ENCODE measurements at regions of chr19 and their contacts with region 1.

Region 1: GRCh38 chr19:12681074-12681951 is at the start of gene DHPS:
- DNase-seq: peak; percentile 82 to 99
- ATAC-seq: peak; percentile 74 to 88 (median 78)
- H3K4me3 ChIP-seq: peak within 1 kb of the TSS; percentile 87
- H3K4me3 Mint-ChIP-seq: peak within 1 kb of the TSS; percentile 99
- H3K27ac ChIP-seq: peak within 1 kb of the TSS; percentile 93
- H3K27ac Mint-ChIP-seq: peak within 1 kb of the TSS; percentile 91 to 100
- H3K4me1 ChIP-seq: peaks cover 23% of the 10 kb centered on the region
- H3K4me1 Mint-ChIP-seq: peaks cover 22 to 27% of the 10 kb centered on the region in 2 donors
- H3K27me3 ChIP-seq: no peaks in the 10 kb centered on the region
- H3K27me3 Mint-ChIP-seq: no peaks in the 10 kb centered on the region
- CTCF ChIP-seq: no peak
- total RNA-seq, gene DHPS: 143 to 193 (median 145) TPM

Region 2: GRCh38 chr19:11597202-11598102 is 1083.9 kb before region 1 on chr19 and contains the start of gene ZNF627:
- intact Hi-C with region 1: loop called (anchors 2 kb)
- DNase-seq: peak; percentile 98
- ATAC-seq: peak; percentile 99 to 100 (median 99)
- H3K4me3 ChIP-seq: peak within 1 kb of the TSS; percentile 78
- H3K4me3 Mint-ChIP-seq: peak within 1 kb of the TSS; percentile 90
- H3K27ac ChIP-seq: peak within 1 kb of the TSS; percentile 81
- H3K27ac Mint-ChIP-seq: peak within 1 kb of the TSS; percentile 71 to 94
- H3K4me1 ChIP-seq: peaks cover 16% of the 10 kb centered on the region
- H3K4me1 Mint-ChIP-seq: peaks cover 24 to 29% of the 10 kb centered on the region in 2 donors
- H3K27me3 ChIP-seq: no peaks in the 10 kb centered on the region
- H3K27me3 Mint-ChIP-seq: no peaks in the 10 kb centered on the region
- CTCF ChIP-seq: peak; percentile 19
- total RNA-seq, gene ZNF627: 4.7 to 7.5 (median 4.9) TPM

Region 3: DNA sequence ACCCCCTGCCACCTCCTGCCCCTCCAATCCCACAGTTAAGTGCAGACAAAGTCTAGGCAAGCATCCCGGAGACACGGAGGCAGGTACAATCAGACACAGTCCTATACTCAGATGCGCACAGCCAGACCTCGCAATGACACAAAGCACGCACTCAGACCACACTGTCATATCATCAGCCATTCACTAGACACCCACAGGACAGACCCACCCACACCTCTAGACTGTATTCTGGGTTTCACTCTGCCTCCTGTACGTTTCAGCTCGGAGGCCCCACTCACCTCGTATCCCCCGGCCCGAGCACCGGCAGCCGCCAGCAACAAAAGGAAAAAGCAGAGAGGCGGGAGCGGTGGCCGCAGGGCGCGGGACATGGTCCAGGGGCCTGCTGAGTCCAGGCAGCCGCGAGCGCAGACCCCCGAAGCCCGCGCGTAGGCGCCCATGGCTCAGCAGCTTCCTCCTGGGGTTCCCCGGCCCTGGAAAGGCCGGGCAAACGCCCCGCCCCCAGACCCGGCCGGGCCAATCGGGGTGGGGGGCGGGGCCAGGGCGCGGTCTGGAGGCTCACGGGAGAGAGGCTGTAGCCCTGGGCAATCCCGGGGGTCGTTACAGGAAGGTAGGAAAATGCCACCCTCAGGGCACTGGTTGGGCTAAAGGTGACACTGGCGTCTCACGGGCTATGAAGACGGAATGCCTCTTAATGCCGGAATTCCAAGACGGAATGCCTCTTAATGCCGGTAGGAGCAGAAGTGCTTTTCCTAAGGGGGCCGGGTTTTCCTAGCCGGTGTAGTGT is 14.9 kb before region 1 on chr19 and contains the starts of genes MAN2B1 and WDR83:
- intact Hi-C with region 1: loop called (anchors 1 kb)
- DNase-seq: peak; percentile 77 to 91
- ATAC-seq: peak; percentile 78 to 87 (median 82)
- H3K4me3 ChIP-seq: peak within 1 kb of the TSS; percentile 94
- H3K4me3 Mint-ChIP-seq: peak within 1 kb of the TSS; percentile 96
- H3K27ac ChIP-seq: peak within 1 kb of the TSS; percentile 90
- H3K27ac Mint-ChIP-seq: peak within 1 kb of the TSS; percentile 98
- H3K4me1 ChIP-seq: peaks cover 59% of the 10 kb centered on the region
- H3K4me1 Mint-ChIP-seq: peaks cover 41 to 52% of the 10 kb centered on the region in 2 donors
- H3K27me3 ChIP-seq: no peaks in the 10 kb centered on the region
- H3K27me3 Mint-ChIP-seq: no peaks in the 10 kb centered on the region
- CTCF ChIP-seq: no peak
- total RNA-seq, gene MAN2B1: 107 to 118 (median 112) TPM
- total RNA-seq, gene WDR83: 17.0 to 25.8 (median 25.1) TPM

Region 4: DNA sequence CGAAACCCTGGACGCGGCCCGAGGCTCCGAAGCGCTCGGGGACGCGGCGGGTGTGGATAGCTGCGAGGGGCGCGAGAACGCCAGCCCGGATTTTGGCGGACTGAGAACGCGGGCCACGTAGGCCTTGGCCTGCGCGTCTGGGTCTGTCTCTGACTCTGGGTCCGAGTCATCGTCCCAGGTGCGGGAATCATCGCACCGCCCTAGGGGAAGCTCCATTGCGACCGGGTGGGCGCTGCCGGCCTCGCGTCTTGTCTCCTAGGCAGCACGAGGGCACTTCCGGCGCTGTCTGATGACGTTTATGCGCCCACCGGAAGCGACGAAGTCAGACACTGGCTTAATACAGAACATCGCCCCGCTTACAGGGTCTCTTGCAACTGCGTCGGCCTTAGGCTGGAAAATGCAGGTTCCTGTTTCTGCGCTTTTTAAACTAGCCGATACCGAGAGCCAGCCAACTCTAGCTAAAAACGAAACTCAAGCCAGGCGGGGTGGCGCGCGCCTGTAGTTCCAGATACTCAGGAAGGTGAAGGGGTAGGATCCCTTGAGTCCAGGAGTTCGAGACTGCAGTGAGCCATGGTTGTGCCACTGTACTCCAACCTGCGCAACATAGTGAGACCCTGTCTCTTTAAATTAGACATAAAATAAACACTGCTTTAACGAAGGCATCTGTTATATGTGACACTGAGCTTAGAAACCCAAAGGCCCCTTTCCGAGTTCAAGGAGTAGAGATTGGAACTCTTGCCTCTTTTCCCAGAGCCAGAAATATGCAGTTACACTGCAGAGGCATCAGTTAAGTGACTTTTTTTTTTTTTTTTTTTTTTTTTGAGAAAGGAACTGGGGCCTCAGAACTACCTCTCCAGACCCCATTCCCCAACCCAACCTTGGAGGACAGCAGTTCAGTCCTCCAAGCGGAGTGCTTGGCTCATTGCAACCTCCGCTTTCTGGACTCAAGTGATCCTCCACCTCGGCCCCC is 15.3 kb after region 1 on chr19 and contains the start of gene FBXW9:
- intact Hi-C with region 1: loop called (anchors 1 kb)
- DNase-seq: peak; percentile 98 to 99
- ATAC-seq: peak; percentile 91 to 96 (median 93)
- H3K4me3 ChIP-seq: peak within 1 kb of the TSS; percentile 80
- H3K4me3 Mint-ChIP-seq: peak within 1 kb of the TSS; percentile 93
- H3K27ac ChIP-seq: peak within 1 kb of the TSS; percentile 94
- H3K27ac Mint-ChIP-seq: peak within 1 kb of the TSS; percentile 92 to 94
- H3K4me1 ChIP-seq: peaks cover 19% of the 10 kb centered on the region
- H3K4me1 Mint-ChIP-seq: peaks cover 0 to 4% of the 10 kb centered on the region in 2 donors
- H3K27me3 ChIP-seq: no peaks in the 10 kb centered on the region
- H3K27me3 Mint-ChIP-seq: no peaks in the 10 kb centered on the region
- CTCF ChIP-seq: no peak
- total RNA-seq, gene FBXW9: 2.2 to 3.2 (median 2.9) TPM

Region 5: DNA sequence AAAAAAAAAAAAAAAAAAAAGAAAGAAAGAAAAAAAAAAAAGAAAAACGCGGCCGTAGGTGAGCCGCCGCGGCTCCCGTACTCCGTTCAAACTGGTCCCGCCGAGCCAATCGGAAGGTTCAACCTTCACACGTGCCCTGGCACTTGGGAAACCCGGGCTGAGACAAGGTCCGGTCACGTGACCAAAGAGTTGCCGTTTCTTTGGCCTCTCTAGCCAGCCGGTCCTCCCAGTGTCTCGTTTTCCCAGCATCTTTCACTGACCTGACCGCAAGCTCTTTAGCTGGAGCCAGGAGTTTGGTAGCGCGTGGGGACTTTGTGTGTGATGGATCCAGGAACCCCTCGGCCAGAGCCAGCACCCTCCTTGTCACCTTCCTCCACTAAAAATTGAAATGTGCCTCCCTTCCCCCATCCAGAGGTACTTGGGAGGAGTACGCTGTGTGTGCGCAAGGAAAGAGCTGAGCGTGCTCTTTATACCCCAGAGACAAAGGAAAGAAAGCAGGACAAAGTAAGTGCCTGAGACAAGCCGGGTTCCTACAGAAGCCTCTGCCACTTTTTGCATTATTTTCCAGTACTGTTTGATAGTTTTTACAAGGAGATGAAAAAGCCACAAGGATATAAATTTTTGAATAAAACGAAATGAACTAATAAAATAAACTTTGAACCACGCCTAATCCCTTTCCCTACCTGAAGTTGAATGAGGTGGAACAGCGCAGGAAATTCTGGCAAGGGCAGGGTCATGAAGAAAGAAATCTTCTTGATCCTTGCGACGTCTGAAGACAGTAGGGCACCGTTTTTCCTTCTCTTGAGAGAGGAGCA is 41.5 kb after region 1 on chr19:
- intact Hi-C with region 1: loop called (anchors 5 kb)
- DNase-seq: peak; percentile 87 to 99
- ATAC-seq: peak; percentile 87 to 97 (median 95)
- H3K4me3 ChIP-seq: peak overlapping the region; percentile 60
- H3K4me3 Mint-ChIP-seq: peak overlapping the region; percentile 93
- H3K27ac ChIP-seq: peak overlapping the region; percentile 44
- H3K27ac Mint-ChIP-seq: peak overlapping the region; percentile 91 to 96
- H3K4me1 ChIP-seq: peaks cover 36% of the 10 kb centered on the region
- H3K4me1 Mint-ChIP-seq: peaks cover 26 to 42% of the 10 kb centered on the region in 2 donors
- H3K27me3 ChIP-seq: no peaks in the 10 kb centered on the region
- H3K27me3 Mint-ChIP-seq: no peaks in the 10 kb centered on the region
- CTCF ChIP-seq: no peak

Region 6: DNA sequence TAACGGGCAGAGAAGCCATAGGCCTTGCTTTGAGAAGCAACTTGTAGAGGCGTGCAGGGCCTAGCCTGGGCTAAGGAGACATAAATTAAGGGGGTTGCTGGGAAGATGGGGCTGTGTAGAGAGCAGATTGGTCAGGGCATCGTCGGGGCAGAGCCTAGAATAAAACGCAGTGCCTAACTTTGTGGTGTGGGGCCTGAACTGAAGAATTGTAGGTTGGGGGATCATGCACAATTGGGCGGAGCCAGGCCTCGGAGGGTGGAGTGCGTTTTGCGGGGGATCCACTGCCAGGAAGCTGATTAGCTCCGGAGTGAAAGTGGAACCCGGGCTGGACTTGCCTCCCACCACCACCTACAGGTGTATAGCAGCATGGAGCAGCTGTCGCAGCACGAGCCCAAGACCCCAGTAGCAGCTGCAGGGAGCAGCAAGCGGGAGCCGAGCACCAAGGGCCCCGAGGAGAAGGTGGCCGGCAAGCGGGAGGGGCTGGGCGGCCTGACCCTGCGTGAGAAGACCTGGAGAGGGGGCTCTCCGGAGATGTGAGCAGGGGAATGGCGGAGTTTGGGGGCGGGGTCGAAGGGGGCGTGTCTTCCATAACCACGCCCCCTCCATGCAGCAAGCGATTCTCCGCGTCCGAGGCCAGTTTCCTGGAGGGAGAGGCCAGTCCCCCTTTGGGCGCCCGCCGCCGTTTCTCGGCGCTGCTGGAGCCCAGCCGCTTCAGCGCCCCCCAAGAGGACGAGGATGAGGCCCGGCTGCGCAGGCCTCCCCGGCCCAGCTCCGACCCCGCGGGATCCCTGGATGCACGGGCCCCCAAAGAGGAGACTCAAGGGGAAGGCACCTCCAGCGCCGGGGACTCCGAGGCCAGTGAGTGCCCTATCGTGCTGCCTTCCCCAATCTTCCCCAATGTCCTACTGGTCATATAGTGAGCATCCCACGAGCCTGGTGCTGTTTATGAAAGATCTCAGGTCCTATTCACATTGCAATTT is 186.1 kb after region 1 on chr19:
- intact Hi-C with region 1: no loop called
- DNase-seq: peak; percentile 65 to 82
- ATAC-seq: peak; percentile 80 to 94 (median 84)
- H3K4me3 ChIP-seq: peak overlapping the region; percentile 48
- H3K4me3 Mint-ChIP-seq: peak overlapping the region; percentile 67
- H3K27ac ChIP-seq: no peak overlapping the region
- H3K27ac Mint-ChIP-seq: peak overlapping the region in 1 of 2 donors; percentile 35
- H3K4me1 ChIP-seq: peaks cover 11% of the 10 kb centered on the region
- H3K4me1 Mint-ChIP-seq: peaks cover 7 to 11% of the 10 kb centered on the region in 2 donors
- H3K27me3 ChIP-seq: no peaks in the 10 kb centered on the region
- H3K27me3 Mint-ChIP-seq: no peaks in the 10 kb centered on the region
- CTCF ChIP-seq: no peak